ENCODE measurements at regions of chr12 and their contacts with region 1.

Region 1: GRCh38 chr12:99005601-99006000 is 360.5 kb downstream of the APAF1 start:
- DNase-seq: no peak
- ATAC-seq: no peak
- H3K4me3 ChIP-seq: no peak overlapping the region
- H3K27ac ChIP-seq: no peak overlapping the region
- H3K4me1 ChIP-seq: no peaks in the 10 kb centered on the region
- H3K27me3 ChIP-seq: no peaks in the 10 kb centered on the region
- CTCF ChIP-seq: no peak

Region 2: GRCh38 chr12:97862072-97862471 is 1143.5 kb before region 1 on chr12:
- intact Hi-C with region 1: no loop called
- DNase-seq: no peak
- ATAC-seq: no peak
- H3K4me3 ChIP-seq: no peak overlapping the region
- H3K27ac ChIP-seq: no peak overlapping the region
- H3K4me1 ChIP-seq: no peaks in the 10 kb centered on the region
- H3K27me3 ChIP-seq: no peaks in the 10 kb centered on the region
- CTCF ChIP-seq: no peak

Region 3: DNA sequence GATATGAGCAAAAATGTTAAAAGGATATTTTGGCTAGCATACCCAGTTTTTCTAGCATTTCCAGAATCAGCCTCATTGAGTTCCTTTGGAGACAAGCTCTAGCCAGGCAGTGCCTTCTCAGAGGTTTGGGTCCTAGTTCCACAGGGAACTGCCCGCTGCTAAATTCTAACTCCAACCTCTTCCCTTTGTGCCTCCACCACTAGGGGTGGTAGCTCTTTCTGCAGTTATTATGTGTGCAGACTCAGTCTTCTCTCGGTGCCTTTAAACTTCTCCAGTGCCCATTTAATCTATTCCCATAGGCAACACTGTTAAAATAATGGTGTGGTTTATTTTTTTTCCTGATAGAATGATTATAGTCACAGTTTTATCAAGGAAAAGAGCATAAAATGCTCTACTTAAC is 433.6 kb before region 1 on chr12:
- intact Hi-C with region 1: loop called in 1 of 3 experiments (anchors 10 kb)
- DNase-seq: no peak
- ATAC-seq: peak in 1 of 4 donors; percentile 65
- H3K4me3 ChIP-seq: no peak overlapping the region
- H3K27ac ChIP-seq: no peak overlapping the region
- H3K4me1 ChIP-seq: no peaks in the 10 kb centered on the region
- H3K27me3 ChIP-seq: no peaks in the 10 kb centered on the region
- CTCF ChIP-seq: no peak

Region 4: DNA sequence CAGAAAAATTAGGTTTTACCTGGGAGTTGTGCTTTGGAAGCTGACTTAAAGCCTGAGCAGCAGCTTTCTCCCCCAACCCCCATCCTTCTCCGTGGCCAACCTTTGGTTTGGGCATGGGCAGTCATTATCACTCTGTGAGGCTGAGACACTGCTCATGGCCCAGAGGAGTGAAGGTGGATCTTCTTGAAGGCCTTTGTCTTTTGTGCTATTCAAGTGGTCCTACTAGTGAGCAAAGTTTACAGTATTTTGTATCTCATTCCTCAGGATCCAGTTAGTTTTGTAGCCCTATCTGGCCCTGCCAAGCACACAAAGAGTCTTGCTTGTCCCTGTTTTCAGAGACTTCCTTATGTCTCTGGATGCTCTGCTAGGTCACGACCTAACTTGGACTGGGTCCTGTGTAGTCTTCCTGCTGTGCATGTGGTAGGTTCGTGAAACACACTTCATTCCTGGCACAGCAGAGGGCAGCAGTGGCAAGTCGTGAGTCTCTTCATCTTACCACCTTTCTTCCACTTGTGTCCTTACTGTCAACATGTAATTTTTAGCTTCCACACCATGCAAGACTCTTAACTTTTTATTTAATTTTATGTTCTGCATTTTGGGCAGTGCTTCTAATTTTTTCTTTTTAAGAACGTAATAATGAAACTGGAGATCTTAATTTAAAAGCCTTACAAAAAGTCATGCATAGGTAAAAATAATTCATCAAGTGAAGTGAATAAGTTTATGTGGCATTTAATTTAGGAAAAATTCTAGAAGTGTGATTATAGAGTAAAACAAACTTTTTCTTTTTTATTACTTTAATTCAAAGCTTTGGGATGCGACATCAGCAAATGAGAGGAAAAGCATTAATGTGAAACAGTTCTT is 306.8 kb before region 1 on chr12:
- intact Hi-C with region 1: loop called in 1 of 3 experiments (anchors 10 kb)
- DNase-seq: peak in 5 of 6 donors; percentile 51 to 75 (median 60)
- ATAC-seq: peak; percentile 90 to 97 (median 94)
- H3K4me3 ChIP-seq: no peak overlapping the region
- H3K27ac ChIP-seq: peak overlapping the region in 1 of 4 donors; percentile 10
- H3K4me1 ChIP-seq: peaks cover 7 to 17% (median 15%) of the 10 kb centered on the region in 3 donors
- H3K27me3 ChIP-seq: no peaks in the 10 kb centered on the region
- CTCF ChIP-seq: peak; percentile 26 to 55 (median 26)